ENCODE measurements at regions of chr19 and their contacts with region 1.

Region 1: DNA sequence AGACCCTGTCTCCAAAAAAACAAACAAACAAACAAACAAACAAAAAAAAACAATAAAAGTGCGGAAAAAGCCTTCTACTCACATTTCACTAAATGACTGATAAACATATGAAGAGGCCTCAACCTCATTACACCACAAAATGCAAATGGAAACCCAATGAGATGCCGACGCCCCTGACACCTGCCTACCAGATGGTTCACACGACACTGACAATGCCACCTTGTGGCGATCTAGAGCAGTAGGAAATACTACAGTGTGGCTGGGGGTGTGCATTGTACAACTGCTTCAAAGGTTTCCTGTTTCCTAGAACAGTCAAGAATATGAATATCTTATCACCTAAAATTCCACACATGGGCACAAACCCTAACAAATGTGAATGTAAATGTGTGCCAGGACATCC is 14.0 kb downstream of the SCGB2B2 start:
- DNase-seq: peak in 1 of 2 experiments; percentile 35
- H3K4me3 ChIP-seq: no peak overlapping the region
- H3K4me3 Mint-ChIP-seq: no peak overlapping the region
- H3K27ac Mint-ChIP-seq: no peak overlapping the region
- H3K4me1 ChIP-seq: no peaks in the 10 kb centered on the region
- H3K4me1 Mint-ChIP-seq: no peaks in the 10 kb centered on the region
- H3K27me3 ChIP-seq: no peaks in the 10 kb centered on the region
- H3K27me3 Mint-ChIP-seq: peaks cover 3% of the 10 kb centered on the region
- CTCF ChIP-seq: peak; percentile 15 to 24

Region 2: DNA sequence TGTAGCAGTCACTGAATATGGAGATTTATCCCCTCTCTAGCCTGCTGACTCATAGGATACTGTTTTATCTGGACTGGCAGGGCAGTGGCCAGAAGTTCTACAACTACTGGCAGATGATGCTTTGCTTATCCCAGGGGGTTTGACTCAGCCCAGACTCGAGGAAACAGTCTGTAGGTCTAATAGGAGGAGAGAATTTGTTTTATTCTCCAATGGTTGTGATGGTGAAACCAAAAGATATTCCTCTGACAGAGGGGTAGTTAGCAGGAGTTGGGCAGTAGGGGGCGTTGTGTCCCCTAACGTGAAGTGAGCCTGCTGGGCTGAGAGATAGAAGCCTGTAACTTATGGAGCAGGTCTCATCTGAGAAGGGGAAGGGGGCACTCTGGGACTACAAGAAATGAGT is 106.4 kb before region 1 on chr19:
- CTCF ChIA-PET with region 1: no interaction called
- POLR2A ChIA-PET with region 1: no interaction called
- intact Hi-C with region 1: loop called (anchors 1 kb)
- DNase-seq: peak in 1 of 2 experiments; percentile 36
- H3K4me3 ChIP-seq: no peak overlapping the region
- H3K4me3 Mint-ChIP-seq: no peak overlapping the region
- H3K27ac Mint-ChIP-seq: no peak overlapping the region
- H3K4me1 ChIP-seq: no peaks in the 10 kb centered on the region
- H3K4me1 Mint-ChIP-seq: no peaks in the 10 kb centered on the region
- H3K27me3 ChIP-seq: no peaks in the 10 kb centered on the region
- H3K27me3 Mint-ChIP-seq: peaks cover 27% of the 10 kb centered on the region
- CTCF ChIP-seq: peak; percentile 36 to 47